Calu3 (cell line): ENCODE measurements at regions of chr9 and their contacts with region 1.

Region 1: GRCh38 chr9:116737152-116737546 is 50.0 kb downstream of the TRIM32 start:
- DNase-seq: peak; percentile 83
- H3K4me3 Mint-ChIP-seq: no peak overlapping the region
- H3K27ac Mint-ChIP-seq: no peak overlapping the region
- H3K4me1 Mint-ChIP-seq: peaks cover 8% of the 10 kb centered on the region
- H3K27me3 Mint-ChIP-seq: no peaks in the 10 kb centered on the region
- CTCF ChIP-seq: peak; percentile 76

Region 2: DNA sequence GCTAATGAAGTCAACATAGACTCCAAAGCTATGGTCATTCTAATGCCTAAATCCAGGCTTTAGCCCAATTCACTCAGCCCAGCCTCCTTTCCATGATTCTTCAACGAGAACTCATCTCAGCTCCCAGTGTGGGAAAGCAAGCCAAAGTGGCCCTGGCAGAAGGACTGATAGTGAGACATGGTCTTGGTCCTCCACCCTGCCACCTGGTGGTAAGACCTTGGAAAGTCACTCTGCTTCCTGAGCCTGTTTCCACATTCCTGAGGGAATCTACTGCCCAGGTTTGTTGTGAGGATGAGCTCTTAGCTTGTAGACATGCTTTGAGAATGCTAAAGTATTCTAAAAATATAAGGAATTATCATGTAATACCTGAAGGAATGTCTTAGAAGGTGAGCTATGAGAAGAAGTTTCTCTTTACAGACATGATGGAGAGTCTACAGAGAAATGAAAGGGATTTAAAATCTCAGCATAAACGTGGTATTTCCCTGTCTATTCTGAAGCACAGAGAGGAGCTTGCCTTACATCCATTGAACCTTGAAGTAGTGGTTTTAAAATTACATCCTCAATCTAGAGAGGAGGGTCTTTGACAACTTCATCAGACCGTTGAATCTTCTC is 123.5 kb after region 1 on chr9:
- CTCF ChIA-PET with region 1: interaction called, 12 read pairs
- intact Hi-C with region 1: loop called (anchors 1 kb)
- DNase-seq: peak; percentile 65
- H3K4me3 Mint-ChIP-seq: no peak overlapping the region
- H3K27ac Mint-ChIP-seq: no peak overlapping the region
- H3K4me1 Mint-ChIP-seq: no peaks in the 10 kb centered on the region
- H3K27me3 Mint-ChIP-seq: peaks cover 12% of the 10 kb centered on the region
- CTCF ChIP-seq: peak; percentile 77